ENCODE measurements at regions of chr1 and their contacts with region 1.

Region 1: GRCh38 chr1:114081437-114082303 is 72.0 kb downstream of the SYT6 start:
- DNase-seq: peak in 1 of 2 donors; percentile 56
- ATAC-seq: peak; percentile 57 to 80 (median 66)
- H3K4me3 ChIP-seq: no peak overlapping the region
- H3K27ac ChIP-seq: peak overlapping the region; percentile 27
- H3K4me1 ChIP-seq: peaks cover 26% of the 10 kb centered on the region
- H3K27me3 ChIP-seq: no peaks in the 10 kb centered on the region
- CTCF ChIP-seq: no peak

Region 2: DNA sequence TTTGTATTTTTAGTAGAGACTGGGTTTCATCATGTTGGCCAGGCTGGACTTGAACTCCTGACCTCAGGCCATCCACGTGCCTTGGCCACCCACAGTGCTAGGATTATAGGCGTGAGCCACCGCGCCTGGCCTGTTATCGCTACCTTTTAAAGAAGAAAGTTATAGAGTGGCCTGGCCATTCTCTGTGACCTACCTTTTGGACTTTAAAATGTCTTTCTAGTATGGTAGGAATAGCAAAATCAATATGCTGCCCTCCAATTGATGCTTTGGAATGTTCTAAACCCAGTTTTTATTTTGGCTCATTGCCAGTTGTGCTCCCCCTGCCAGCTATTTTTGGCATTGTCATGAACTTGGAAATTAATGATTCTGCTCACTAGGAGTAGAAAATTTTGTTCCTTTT is 132.7 kb before region 1 on chr1:
- intact Hi-C with region 1: no loop called
- DNase-seq: no peak
- ATAC-seq: peak in 2 of 4 donors; percentile 58 to 67
- H3K4me3 ChIP-seq: no peak overlapping the region
- H3K27ac ChIP-seq: no peak overlapping the region
- H3K4me1 ChIP-seq: peaks cover 38% of the 10 kb centered on the region
- H3K27me3 ChIP-seq: no peaks in the 10 kb centered on the region
- CTCF ChIP-seq: peak; percentile 26

Region 3: DNA sequence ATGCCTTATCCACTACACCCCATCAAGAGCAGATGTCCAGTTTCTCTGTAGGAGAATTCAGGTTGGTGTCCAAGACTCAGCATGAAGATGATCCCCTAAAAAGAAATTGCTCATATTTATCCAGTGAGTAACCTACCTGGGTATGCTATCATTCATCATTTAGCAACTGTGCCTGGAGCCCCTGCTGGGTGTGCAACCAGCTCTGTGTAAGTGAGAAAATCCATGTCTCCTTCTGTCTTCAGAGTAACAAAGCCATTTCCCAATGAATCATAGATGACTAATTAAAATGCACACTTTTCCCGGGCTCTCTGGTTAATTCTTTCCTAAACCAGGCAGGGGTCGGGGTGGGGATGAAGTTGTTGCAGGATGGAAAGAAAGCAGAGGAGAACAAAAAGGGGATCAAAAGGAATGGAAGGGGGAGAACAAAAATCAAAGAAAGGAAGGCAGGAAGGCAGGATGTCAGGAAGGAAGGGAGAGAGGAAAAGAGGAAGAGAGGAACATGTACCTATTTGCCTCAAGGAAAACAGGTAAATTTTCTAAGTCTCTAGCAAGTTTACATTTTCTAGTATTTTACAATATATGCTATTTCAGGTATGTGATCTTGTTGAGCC is 66.5 kb before region 1 on chr1:
- intact Hi-C with region 1: no loop called
- DNase-seq: no peak
- ATAC-seq: no peak
- H3K4me3 ChIP-seq: no peak overlapping the region
- H3K27ac ChIP-seq: no peak overlapping the region
- H3K4me1 ChIP-seq: no peaks in the 10 kb centered on the region
- H3K27me3 ChIP-seq: no peaks in the 10 kb centered on the region
- CTCF ChIP-seq: no peak

Region 4: DNA sequence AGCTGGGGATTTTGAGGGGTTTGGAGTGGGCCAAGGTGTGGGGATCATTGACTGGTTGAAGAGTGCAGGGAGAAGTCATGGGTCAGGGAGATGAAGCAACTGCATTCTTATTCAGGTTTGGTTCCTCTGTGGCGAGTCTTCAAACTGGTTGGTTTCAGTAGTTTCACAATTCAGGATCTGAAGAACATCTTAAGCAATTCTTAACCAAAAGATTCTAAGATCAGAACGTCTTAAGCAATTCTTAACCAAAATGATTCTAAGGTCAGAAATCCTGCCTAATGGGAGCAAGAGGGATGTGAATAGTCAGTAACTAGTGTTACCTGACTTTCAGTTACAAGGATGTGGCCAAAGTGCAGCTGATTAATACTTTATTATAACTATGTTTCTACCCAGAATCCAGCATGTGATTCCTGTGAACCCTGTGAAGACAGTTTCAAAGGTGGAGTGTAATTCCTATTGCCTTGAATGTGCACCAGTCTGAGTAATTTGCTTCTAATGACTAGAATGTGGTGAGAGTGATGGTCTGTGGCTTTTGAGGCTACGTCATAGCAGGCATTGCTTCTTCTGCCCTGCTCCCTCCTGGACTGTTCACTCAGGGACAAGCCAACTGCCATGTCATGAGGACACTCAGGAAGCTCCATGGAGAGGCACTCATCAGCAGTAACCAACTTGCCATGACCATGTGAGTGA is 41.2 kb before region 1 on chr1:
- intact Hi-C with region 1: loop called in 1 of 2 experiments (anchors 5 kb)
- DNase-seq: no peak
- ATAC-seq: peak in 2 of 4 donors; percentile 48 to 57
- H3K4me3 ChIP-seq: no peak overlapping the region
- H3K27ac ChIP-seq: no peak overlapping the region
- H3K4me1 ChIP-seq: no peaks in the 10 kb centered on the region
- H3K27me3 ChIP-seq: no peaks in the 10 kb centered on the region
- CTCF ChIP-seq: no peak